ENCODE measurements at regions of chr2 and their contacts with region 1.

Region 1: DNA sequence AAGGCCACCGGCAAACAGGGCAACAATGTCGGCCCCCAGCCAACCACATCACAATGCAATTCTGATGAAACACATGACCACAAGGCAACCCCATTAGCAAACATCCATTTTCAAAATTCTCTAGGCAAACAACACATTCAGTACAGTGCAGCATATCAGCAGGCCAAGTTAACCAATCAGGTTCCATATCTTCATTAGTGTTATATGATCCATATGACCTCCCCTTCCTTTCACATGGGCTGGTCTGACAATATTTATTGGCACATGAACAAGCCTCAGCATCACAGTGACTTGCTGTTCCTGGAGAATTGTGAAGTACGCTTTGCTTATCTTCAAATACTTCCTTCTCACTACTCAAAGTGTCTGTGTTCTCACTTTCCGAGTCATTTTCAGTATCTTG is 19.8 kb downstream of the RNF103 start:
- DNase-seq: no peak
- ATAC-seq: no peak

Region 2: DNA sequence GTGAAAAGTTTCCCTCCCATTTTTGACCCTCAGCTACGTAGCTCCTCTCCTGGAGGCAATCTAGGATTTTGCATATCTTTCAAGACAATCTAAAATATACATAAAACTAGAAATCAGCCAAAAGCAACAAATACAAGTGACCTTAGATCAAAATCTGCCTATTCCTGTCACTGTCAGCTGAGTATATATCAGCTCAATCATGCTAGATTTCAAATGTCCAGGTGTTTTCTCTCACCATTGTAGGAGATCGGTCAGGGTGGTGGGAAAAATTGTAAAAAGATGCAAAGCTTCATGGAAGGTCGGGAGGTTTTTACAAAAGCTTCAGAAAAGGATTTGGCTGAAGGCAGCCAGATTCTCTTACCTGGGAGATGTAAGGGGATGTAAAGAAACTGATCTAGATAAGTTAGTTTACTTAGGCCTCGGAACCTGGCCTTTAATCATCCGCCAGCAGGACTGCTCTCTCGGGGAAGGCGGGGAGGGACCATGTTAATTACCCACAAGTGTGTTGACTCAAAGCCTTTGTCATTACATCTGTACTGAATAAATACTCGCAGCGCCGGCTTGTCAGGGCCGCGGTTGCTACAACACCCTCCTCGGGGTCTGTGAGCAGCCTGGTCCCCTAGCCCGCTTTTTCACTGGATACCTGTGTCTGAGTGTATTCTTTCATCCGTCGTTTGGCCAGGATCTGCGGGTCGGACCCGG is 47.6 kb before region 1 on chr2:
- intact Hi-C with region 1: loop called (anchors 10 kb)
- DNase-seq: no peak
- ATAC-seq: no peak

Region 3: DNA sequence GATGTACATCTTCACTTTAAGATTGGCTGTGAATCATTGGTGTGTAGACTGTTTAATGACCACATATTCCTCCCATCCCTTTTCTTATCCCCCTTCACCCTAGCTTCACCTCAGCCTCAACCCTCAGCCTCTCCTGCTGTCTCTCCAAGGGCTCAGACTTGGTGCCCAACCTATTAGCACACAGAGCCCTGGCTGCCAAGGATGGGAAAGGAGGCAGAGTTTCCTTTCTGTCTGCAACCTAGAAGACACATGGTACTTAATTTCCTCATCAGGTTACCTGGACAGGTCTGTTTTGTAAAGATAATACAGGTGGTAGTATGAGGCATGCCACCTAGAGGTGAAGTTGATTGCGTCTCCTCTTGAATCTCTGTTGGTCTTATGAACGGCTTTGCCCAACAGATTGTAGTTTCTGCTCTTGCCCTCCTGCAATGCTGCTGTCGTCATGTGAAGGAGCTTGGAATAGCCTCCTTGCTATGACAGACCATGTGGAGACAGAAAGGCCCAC is 71.7 kb after region 1 on chr2:
- intact Hi-C with region 1: no loop called
- DNase-seq: no peak
- ATAC-seq: peak; percentile 7